WTC11 (cell line): ENCODE measurements at regions of chr6 and their contacts with region 1.

Region 1: GRCh38 chr6:34610819-34611477 is 54.8 kb upstream of the SPDEF start:
- DNase-seq: no peak
- ATAC-seq: no peak
- H3K4me3 Mint-ChIP-seq: no peak overlapping the region
- H3K27ac Mint-ChIP-seq: peak overlapping the region; percentile 14; the same call in 1 of the 2 replicates
- H3K4me1 Mint-ChIP-seq: peaks cover 2% of the 10 kb centered on the region; the same call in 1 of the 2 replicates
- H3K27me3 Mint-ChIP-seq: no peaks in the 10 kb centered on the region
- CTCF ChIP-seq: no peak

Region 2: GRCh38 chr6:34182751-34183531 is 428.0 kb before region 1 on chr6:
- CTCF ChIA-PET with region 1: no interaction called
- POLR2A ChIA-PET with region 1: no interaction called
- DNase-seq: no peak
- ATAC-seq: no peak
- H3K4me3 Mint-ChIP-seq: no peak overlapping the region
- H3K27ac Mint-ChIP-seq: no peak overlapping the region
- H3K4me1 Mint-ChIP-seq: no peaks in the 10 kb centered on the region
- H3K27me3 Mint-ChIP-seq: peaks cover 4% of the 10 kb centered on the region; the same call in 1 of the 2 replicates
- CTCF ChIP-seq: no peak

Region 3: GRCh38 chr6:34459899-34460593 is 150.9 kb before region 1 on chr6:
- CTCF ChIA-PET with region 1: interaction called, 102 read pairs
- POLR2A ChIA-PET with region 1: no interaction called
- DNase-seq: peak; percentile 63
- ATAC-seq: peak; percentile 52
- H3K4me3 Mint-ChIP-seq: no peak overlapping the region
- H3K27ac Mint-ChIP-seq: no peak overlapping the region
- H3K4me1 Mint-ChIP-seq: peaks cover 26% of the 10 kb centered on the region
- H3K27me3 Mint-ChIP-seq: peaks cover 4% of the 10 kb centered on the region
- CTCF ChIP-seq: peak; percentile 72

Region 4: GRCh38 chr6:34476447-34476846 is 134.5 kb before region 1 on chr6:
- CTCF ChIA-PET with region 1: interaction called, 12 read pairs
- POLR2A ChIA-PET with region 1: interaction called, 5 read pairs
- DNase-seq: no peak
- ATAC-seq: peak; percentile 43; the same call in 1 of the 2 replicates
- H3K4me3 Mint-ChIP-seq: no peak overlapping the region
- H3K27ac Mint-ChIP-seq: no peak overlapping the region
- H3K4me1 Mint-ChIP-seq: peaks cover 4% of the 10 kb centered on the region; the same call in 1 of the 2 replicates
- H3K27me3 Mint-ChIP-seq: no peaks in the 10 kb centered on the region; the same call in 1 of the 2 replicates
- CTCF ChIP-seq: no peak

Region 5: GRCh38 chr6:34560366-34561226 is 50.4 kb before region 1 on chr6:
- CTCF ChIA-PET with region 1: interaction called, 10 read pairs
- POLR2A ChIA-PET with region 1: no interaction called
- DNase-seq: peak; percentile 39
- ATAC-seq: no peak
- H3K4me3 Mint-ChIP-seq: no peak overlapping the region
- H3K27ac Mint-ChIP-seq: peak overlapping the region; percentile 11; the same call in 1 of the 2 replicates
- H3K4me1 Mint-ChIP-seq: peaks cover 14% of the 10 kb centered on the region
- H3K27me3 Mint-ChIP-seq: no peaks in the 10 kb centered on the region; the same call in 1 of the 2 replicates
- CTCF ChIP-seq: no peak

Region 6: GRCh38 chr6:34633256-34633655 is 22.3 kb after region 1 on chr6:
- CTCF ChIA-PET with region 1: no interaction called
- POLR2A ChIA-PET with region 1: no interaction called
- DNase-seq: no peak
- ATAC-seq: no peak
- H3K4me3 Mint-ChIP-seq: no peak overlapping the region
- H3K27ac Mint-ChIP-seq: no peak overlapping the region
- H3K4me1 Mint-ChIP-seq: no peaks in the 10 kb centered on the region
- H3K27me3 Mint-ChIP-seq: no peaks in the 10 kb centered on the region
- CTCF ChIP-seq: no peak

Region 7: DNA sequence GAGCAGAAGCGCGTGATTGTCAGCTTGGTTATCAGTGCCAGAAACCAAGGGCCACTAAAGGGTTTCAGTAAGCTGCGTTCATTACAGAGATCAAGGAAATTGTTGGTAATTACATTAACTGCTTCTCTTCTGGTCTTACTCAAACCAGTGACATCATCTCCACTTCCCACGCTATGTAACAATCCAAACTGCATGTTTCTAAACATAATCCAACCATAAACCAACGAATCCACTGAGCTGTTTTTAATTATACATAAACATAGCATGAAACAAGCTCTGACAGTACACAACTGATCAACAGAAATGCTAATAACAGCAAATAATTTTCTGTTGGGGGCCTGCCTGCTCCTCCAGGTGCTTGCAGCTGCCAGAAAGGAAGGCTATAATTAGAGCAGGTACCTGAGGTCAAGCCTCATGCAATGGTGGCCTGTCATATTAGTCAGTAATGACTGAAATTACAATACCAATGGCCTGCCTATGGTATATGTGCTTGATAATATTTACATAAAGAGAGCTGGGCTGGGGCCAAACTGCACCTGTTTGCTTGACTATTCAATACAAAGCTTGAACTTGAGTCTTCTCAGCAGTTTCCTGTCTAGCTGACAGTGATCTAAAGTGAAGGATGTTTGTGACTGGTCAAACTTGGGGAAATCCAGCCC is 45.6 kb after region 1 on chr6:
- CTCF ChIA-PET with region 1: interaction called, 10 read pairs
- POLR2A ChIA-PET with region 1: interaction called, 8 read pairs
- DNase-seq: no peak
- ATAC-seq: no peak
- H3K4me3 Mint-ChIP-seq: no peak overlapping the region
- H3K27ac Mint-ChIP-seq: peak overlapping the region; percentile 78
- H3K4me1 Mint-ChIP-seq: peaks cover 28% of the 10 kb centered on the region
- H3K27me3 Mint-ChIP-seq: no peaks in the 10 kb centered on the region
- CTCF ChIP-seq: no peak

Region 8: DNA sequence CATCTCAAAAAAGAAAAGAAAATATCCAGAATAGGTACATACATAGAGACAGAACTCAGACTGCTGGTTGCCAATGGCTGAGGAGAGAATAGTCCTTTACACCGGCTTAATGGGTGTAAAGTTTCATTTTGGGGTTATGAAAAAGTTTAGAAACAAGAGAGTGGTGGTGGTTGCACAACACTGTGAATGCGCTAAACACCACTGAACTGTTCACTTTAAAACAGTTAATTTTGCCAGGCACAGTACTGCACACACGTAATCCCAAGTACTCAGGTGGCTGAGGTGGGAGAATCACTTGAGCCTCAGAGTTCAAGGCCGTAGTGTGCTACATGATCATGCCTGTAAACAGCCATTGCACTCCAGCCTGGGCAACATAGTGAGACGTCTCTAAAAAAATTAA is 78.0 kb after region 1 on chr6:
- CTCF ChIA-PET with region 1: no interaction called
- POLR2A ChIA-PET with region 1: no interaction called
- DNase-seq: no peak
- ATAC-seq: no peak
- H3K4me3 Mint-ChIP-seq: no peak overlapping the region
- H3K27ac Mint-ChIP-seq: peak overlapping the region; percentile 29; the same call in 1 of the 2 replicates
- H3K4me1 Mint-ChIP-seq: no peaks in the 10 kb centered on the region; the same call in 1 of the 2 replicates
- H3K27me3 Mint-ChIP-seq: no peaks in the 10 kb centered on the region
- CTCF ChIP-seq: no peak